ENCODE measurements at regions of chr11 and their contacts with region 1.

Region 1: GRCh38 chr11:1889224-1890120 is 2.2 kb downstream of the PRR33 start:
- DNase-seq: peak; percentile 88
- ATAC-seq: peak; percentile 81
- H3K4me3 Mint-ChIP-seq: peak overlapping the region; percentile 83
- H3K27ac Mint-ChIP-seq: peak overlapping the region; percentile 87
- H3K4me1 Mint-ChIP-seq: peaks cover 37% of the 10 kb centered on the region
- H3K27me3 Mint-ChIP-seq: no peaks in the 10 kb centered on the region
- CTCF ChIP-seq: no peak

Region 2: GRCh38 chr11:1852877-1853276 is 36.6 kb before region 1 on chr11 and contains the start of gene LSP1:
- CTCF ChIA-PET with region 1: interaction called, 5 read pairs
- POLR2A ChIA-PET with region 1: interaction called, 81 read pairs
- intact Hi-C with region 1: no loop called
- DNase-seq: peak; percentile 95
- ATAC-seq: peak; percentile 65
- H3K4me3 Mint-ChIP-seq: peak within 1 kb of the TSS; percentile 86
- H3K27ac Mint-ChIP-seq: peak within 1 kb of the TSS; percentile 95
- H3K4me1 Mint-ChIP-seq: peaks cover 53% of the 10 kb centered on the region
- H3K27me3 Mint-ChIP-seq: no peaks in the 10 kb centered on the region
- CTCF ChIP-seq: no peak
- total RNA-seq, gene LSP1: 247 to 251 TPM

Region 3: GRCh38 chr11:1917671-1918516 is 28.4 kb after region 1 on chr11:
- CTCF ChIA-PET with region 1: interaction called, 12 read pairs
- POLR2A ChIA-PET with region 1: interaction called, 62 read pairs
- intact Hi-C with region 1: loop called (anchors 1 kb)
- DNase-seq: no peak
- ATAC-seq: peak; percentile 32
- H3K4me3 Mint-ChIP-seq: no peak overlapping the region
- H3K27ac Mint-ChIP-seq: no peak overlapping the region
- H3K4me1 Mint-ChIP-seq: peaks cover 19% of the 10 kb centered on the region
- H3K27me3 Mint-ChIP-seq: peaks cover 6% of the 10 kb centered on the region
- CTCF ChIP-seq: peak; percentile 59

Region 4: DNA sequence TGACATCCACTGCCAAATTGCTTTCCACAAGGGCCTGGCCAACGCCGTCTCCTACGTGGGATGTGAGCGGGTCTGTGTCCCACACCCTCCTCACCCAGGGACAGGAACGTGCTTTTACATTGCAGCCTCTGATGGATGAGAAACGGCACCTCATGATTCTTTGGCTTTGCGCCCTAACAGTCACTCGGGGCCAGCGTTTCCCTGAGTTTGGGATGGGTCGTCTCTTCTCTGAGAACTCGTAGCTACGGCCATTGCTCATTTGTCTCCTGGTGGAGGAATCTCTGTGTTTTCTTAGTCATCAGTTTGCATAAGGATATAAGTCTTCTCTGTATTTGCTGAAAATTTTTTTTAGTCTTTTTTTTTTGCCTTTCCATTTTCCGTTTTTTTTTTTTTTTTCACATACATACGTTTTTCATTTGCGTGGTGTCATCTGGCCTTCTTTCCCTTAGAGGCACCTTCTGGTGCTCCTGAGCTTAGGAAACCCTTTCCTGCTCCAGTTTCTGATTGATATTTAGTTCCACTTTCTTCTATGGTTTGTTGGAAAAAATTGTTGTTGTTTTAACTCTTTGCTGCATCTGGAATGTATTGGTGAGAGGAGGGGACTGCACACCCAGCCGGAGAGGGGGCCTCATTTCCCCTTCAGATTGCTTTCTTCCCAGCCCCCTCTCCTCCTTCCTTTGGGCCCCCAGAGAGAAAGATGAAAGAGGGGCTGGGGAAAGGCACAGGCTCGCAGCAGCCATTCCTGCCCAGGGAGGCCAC is 42.0 kb after region 1 on chr11:
- CTCF ChIA-PET with region 1: no interaction called
- POLR2A ChIA-PET with region 1: no interaction called
- intact Hi-C with region 1: no loop called
- DNase-seq: no peak
- ATAC-seq: no peak
- H3K4me3 Mint-ChIP-seq: no peak overlapping the region
- H3K27ac Mint-ChIP-seq: no peak overlapping the region
- H3K4me1 Mint-ChIP-seq: peaks cover 2% of the 10 kb centered on the region
- H3K27me3 Mint-ChIP-seq: no peaks in the 10 kb centered on the region
- CTCF ChIP-seq: no peak

Region 5: DNA sequence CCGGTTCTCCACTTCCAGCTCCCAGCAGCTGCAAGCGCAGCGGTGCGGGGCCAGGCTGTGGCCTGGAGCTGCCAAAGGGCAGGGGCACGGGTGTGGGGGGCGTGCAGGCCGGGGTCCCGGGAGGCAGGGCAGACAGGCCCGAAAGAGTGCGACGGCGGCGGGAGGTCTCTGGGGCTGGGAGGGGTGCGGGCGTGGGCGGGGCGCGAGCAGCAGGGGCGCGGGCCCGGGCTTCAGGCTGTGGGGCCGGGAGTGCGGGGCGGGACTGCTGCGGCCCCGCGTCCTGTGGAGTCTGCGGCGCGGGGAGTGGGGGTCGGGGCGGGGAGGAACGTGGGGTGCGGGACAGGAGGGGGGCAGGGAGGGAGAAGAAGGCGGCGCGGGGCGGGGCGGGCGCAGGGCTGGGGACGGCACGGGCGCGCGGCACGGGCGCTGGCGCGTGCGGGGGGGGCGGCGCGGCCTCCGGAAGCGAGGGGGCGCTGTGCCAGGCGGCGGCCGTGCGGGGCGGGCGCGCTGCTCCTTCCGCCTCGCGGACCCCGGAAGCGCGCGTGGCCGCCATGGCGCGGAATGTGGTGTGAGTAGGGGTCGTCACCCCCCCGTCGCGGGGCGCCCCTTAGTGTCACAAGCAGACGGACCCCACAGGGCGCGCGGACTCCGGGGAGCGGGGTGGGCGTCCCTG is 57.5 kb after region 1 on chr11 and contains the start of gene MRPL23:
- CTCF ChIA-PET with region 1: no interaction called
- POLR2A ChIA-PET with region 1: interaction called, 12 read pairs
- intact Hi-C with region 1: no loop called
- DNase-seq: peak; percentile 29
- ATAC-seq: peak; percentile 88
- H3K4me3 Mint-ChIP-seq: no peak within 1 kb of the TSS
- H3K27ac Mint-ChIP-seq: no peak within 1 kb of the TSS
- H3K4me1 Mint-ChIP-seq: no peaks in the 10 kb centered on the region
- H3K27me3 Mint-ChIP-seq: no peaks in the 10 kb centered on the region
- CTCF ChIP-seq: no peak
- total RNA-seq, gene MRPL23: 134 to 145 TPM

Region 6: DNA sequence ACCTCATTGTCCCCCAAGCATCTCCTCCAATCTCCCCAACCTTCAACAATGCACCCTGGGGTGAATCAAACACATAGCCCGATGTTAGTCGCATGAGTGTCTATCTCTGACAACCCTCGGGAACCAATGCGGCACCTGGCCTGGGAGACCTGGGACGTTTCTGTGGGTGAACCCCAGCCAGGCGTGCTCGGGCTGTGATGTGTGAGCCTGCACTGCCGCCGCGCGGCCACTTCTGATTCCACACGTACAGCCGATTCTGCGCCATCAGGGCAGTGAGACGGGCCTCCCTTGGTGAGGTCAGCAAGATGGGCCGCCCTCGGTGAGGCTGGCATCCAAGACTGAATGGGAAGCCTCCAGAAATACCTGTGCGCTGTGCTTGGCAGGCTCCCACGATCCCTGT is 113.3 kb after region 1 on chr11:
- CTCF ChIA-PET with region 1: interaction called, 12 read pairs
- POLR2A ChIA-PET with region 1: no interaction called
- intact Hi-C with region 1: no loop called
- DNase-seq: no peak
- ATAC-seq: peak; percentile 76
- H3K4me3 Mint-ChIP-seq: no peak overlapping the region
- H3K27ac Mint-ChIP-seq: no peak overlapping the region
- H3K4me1 Mint-ChIP-seq: no peaks in the 10 kb centered on the region
- H3K27me3 Mint-ChIP-seq: no peaks in the 10 kb centered on the region
- CTCF ChIP-seq: no peak